ENCODE measurements at regions of chr1 and their contacts with region 1.

Region 1: GRCh38 chr1:201511941-201512539 is 5.1 kb upstream of the CSRP1 start:
- DNase-seq: no peak
- ATAC-seq: no peak
- H3K4me3 Mint-ChIP-seq: no peak overlapping the region
- H3K27ac Mint-ChIP-seq: no peak overlapping the region
- H3K4me1 Mint-ChIP-seq: peaks cover 16% of the 10 kb centered on the region
- H3K27me3 Mint-ChIP-seq: no peaks in the 10 kb centered on the region
- CTCF ChIP-seq: no peak

Region 2: GRCh38 chr1:201436393-201436792 is 75.6 kb before region 1 on chr1:
- CTCF ChIA-PET with region 1: interaction called, 33 read pairs
- POLR2A ChIA-PET with region 1: interaction called, 3 read pairs
- intact Hi-C with region 1: no loop called
- DNase-seq: no peak
- ATAC-seq: no peak
- H3K4me3 Mint-ChIP-seq: no peak overlapping the region
- H3K27ac Mint-ChIP-seq: no peak overlapping the region
- H3K4me1 Mint-ChIP-seq: peaks cover 6% of the 10 kb centered on the region
- H3K27me3 Mint-ChIP-seq: peaks cover 17% of the 10 kb centered on the region
- CTCF ChIP-seq: no peak

Region 3: DNA sequence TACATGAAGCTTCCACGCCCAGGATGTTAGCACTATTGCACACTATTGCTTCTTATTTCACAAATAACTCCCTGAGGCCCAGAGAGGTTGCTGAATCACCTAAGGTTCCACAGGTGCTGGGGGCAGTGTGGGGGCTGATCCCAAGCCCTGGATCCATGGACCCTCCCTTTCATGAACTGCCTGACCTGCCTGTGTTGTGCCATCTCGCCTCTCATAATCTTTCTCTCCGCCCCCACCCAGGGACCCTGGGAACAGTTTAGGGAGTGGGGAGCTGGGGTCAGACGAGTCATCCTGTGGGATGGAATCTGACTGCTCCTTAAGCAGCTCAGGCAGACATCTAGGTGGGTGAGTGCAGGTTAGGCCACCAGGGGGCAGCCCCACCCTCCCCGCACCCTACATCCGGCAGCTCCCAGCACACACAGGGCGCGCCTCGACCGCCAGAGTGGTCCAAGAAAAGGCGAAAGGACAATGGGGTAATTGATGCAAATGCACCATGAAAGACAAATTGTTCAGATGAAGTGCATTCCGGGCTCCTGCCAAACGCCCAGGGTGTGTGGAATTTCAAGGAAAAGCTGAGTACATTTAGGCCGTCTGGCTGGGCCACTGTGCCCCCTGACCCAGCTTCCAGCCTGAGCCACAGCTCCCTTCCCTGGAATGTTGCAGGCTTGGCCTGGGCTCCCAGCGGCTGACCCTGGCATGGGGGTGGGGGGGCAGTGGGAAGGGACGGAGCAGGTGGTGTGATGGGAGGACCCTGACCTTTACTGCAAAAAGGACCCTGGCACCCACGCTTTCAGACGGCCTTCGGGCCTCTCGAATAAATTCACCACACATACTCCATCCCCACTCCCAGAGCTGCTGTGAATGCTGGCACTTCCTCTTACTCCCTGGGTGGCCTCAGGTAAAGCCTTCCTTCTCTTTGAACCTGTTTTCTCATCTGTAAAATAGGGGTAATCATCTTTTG is 63.8 kb before region 1 on chr1:
- CTCF ChIA-PET with region 1: interaction called, 114 read pairs
- POLR2A ChIA-PET with region 1: no interaction called
- intact Hi-C with region 1: loop called (anchors 5 kb)
- DNase-seq: peak; percentile 84
- ATAC-seq: peak; percentile 98
- H3K4me3 Mint-ChIP-seq: no peak overlapping the region
- H3K27ac Mint-ChIP-seq: no peak overlapping the region
- H3K4me1 Mint-ChIP-seq: peaks cover 8% of the 10 kb centered on the region
- H3K27me3 Mint-ChIP-seq: peaks cover 16% of the 10 kb centered on the region
- CTCF ChIP-seq: peak; percentile 72

Region 4: DNA sequence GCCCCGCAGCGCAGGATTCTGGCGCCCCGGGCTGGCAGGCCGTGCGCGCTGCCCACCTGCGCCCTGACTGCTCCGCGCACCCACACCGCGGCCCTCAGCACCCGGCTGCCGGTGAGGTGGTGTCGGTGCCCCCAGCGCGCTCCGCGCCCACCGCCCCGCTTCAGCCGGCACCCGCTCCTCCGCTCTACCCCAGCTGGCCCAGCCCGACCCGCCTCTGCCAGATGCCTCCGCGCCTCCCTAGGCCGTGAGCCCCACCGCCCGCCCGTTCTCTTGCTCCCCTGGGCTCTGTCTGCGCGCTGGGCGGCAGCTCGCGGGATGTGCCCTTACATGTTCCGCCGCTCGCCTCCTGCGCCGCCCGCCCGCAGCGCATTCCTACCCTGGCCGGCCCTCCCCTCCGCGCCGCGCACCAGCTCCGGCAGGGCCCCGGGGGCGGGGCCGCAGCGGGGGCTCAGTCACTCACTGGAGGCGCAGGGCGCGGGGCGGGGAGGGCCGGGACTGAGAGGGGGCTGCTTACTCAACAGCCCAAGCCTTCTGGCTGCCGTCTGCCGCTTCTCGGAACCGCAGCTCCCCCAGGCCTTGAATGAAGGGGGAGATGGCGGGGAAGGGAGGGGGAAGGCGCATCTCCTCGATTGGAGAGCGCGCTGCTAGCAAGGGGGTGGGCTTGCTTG is 43.1 kb before region 1 on chr1 and contains the start of gene PHLDA3:
- CTCF ChIA-PET with region 1: interaction called, 17 read pairs
- POLR2A ChIA-PET with region 1: no interaction called
- intact Hi-C with region 1: no loop called
- DNase-seq: peak; percentile 73
- ATAC-seq: peak; percentile 84
- H3K4me3 Mint-ChIP-seq: peak within 1 kb of the TSS; percentile 67
- H3K27ac Mint-ChIP-seq: no peak within 1 kb of the TSS
- H3K4me1 Mint-ChIP-seq: peaks cover 3% of the 10 kb centered on the region
- H3K27me3 Mint-ChIP-seq: peaks cover 48% of the 10 kb centered on the region
- CTCF ChIP-seq: no peak
- total RNA-seq, gene PHLDA3: 6.2 to 7.9 TPM

Region 5: DNA sequence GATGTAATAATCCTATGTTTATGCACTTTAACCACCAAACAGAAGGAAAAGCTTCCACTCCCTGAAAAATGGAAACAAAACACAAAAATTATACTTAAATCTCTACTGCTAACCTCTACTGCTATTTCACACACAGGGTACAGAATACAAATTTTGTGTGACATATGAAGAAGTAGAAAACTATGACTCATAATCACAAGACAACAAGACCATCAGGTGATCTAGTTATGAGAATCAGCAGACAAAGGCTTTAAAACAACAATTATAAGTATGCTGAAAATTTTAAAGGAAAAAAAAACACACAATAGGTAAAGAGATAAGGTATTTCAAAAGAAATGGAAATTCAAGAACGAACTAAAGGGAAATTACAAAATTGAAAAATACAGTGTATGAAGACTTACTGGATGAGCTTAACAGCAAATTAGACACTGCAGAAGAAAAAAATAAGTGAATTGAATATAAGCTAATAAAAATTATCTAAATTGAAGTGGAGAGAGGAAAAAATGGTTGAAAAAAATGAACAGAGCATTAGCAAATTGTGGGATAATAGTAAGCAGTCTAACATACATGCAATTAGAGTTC is 13.2 kb after region 1 on chr1:
- CTCF ChIA-PET with region 1: interaction called, 46 read pairs
- POLR2A ChIA-PET with region 1: interaction called, 7 read pairs
- intact Hi-C with region 1: no loop called
- DNase-seq: no peak
- ATAC-seq: no peak
- H3K4me3 Mint-ChIP-seq: no peak overlapping the region
- H3K27ac Mint-ChIP-seq: no peak overlapping the region
- H3K4me1 Mint-ChIP-seq: no peaks in the 10 kb centered on the region
- H3K27me3 Mint-ChIP-seq: no peaks in the 10 kb centered on the region
- CTCF ChIP-seq: no peak

Region 6: DNA sequence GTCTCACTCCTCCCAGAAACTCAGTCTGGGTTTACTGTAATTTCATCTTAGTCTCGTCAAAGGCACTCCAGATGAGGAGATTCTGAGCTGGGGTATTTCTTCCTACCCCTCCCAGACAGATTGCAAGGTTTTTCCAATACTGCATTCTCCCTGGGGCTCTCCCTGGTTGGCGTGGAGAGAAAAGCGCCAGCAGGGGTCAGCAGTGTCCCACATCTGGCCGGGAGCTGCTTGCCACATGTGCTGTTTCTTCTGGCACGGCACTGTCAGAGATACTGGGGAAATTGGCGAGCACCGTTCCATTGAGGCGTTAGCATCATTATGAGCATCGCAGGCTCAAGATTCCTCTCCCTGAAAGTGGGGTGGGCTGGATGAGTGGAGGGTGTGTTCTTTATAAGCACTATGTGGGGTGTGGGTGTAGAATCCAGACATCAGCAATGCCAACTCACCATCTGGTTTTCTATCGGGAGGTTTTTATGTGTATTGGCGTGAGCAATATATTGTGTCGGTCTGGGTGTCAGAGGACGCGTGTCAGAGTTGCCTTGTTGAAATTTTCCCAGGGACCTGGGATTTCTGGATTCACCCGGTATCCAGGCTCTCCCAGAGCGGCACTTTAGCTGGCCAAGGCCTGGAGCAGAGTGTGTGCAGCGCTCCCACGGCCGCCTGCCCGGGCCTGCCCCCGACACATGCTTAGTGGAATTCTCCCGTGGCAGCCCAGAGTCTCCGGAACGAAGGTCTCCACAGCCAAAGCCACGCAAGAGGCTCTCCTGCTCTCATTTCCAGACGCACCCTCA is 18.9 kb after region 1 on chr1:
- CTCF ChIA-PET with region 1: interaction called, 46 read pairs
- POLR2A ChIA-PET with region 1: no interaction called
- intact Hi-C with region 1: no loop called
- DNase-seq: peak; percentile 66
- ATAC-seq: peak; percentile 72
- H3K4me3 Mint-ChIP-seq: no peak overlapping the region
- H3K27ac Mint-ChIP-seq: no peak overlapping the region
- H3K4me1 Mint-ChIP-seq: peaks cover 3% of the 10 kb centered on the region
- H3K27me3 Mint-ChIP-seq: peaks cover 6% of the 10 kb centered on the region
- CTCF ChIP-seq: peak; percentile 43

Measured in activated CD8-positive, alpha-beta T cell treated with anti-CD3 and anti-CD28 coated beads for 36 hours (primary cell).